Activated T-helper 1 cell treated with anti-CD3 and anti-CD28 coated beads, Interleukin-12 subunit alpha, Interleukin-12 subunit beta, Interleukin-2, Interleukin-4 antibody, amounts not matched to agents 30 ng/mL and 10 ng/mL and 1 ng/mL, durations not matched to agents 14 hours and 24 hours and 36 hours (primary cell): ENCODE measurements at regions of chr2 and their contacts with region 1.

Region 1: DNA sequence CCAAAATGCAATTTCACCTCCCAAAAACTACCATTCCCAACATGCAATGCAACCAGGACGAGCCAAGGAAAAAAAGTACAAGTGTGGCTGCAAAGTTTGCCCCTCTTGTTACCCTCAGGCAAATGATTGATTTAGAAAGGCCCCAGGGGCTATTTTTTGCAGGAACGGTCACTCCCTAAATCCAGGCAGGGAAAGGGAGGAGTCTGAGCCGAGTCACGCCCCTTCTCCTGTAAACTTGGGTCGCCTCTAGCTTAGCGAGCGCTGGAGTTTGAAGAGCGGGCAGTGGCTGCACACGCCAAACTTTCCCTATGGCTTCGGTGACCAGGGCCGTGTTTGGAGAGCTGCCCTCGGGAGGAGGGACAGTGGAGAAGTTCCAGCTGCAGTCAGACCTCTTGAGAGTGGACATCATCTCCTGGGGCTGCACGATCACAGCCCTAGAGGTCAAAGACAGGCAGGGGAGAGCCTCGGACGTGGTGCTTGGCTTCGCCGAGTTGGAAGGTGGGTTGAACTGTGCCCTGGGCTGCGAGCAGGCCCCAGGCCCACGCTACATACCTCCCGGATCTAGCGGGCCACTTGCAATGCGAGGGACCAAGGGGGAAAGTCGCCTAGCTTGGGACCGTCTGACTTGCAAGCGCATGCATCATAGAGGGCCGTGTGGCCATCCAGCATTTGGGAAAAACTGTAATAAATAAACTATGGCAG is at the start of gene GALM:
- DNase-seq: peak; percentile 54
- H3K4me3 Mint-ChIP-seq: peak within 1 kb of the TSS; percentile 93
- H3K27ac Mint-ChIP-seq: peak within 1 kb of the TSS; percentile 94
- H3K4me1 Mint-ChIP-seq: peaks cover 69% of the 10 kb centered on the region
- H3K27me3 Mint-ChIP-seq: no peaks in the 10 kb centered on the region
- total RNA-seq, gene GALM: 77.0 and 78.4 TPM in 2 replicates

Region 2: GRCh38 chr2:38030635-38031355 is 635.2 kb before region 1 on chr2:
- intact Hi-C with region 1: no loop called
- DNase-seq: no peak
- H3K4me3 Mint-ChIP-seq: no peak overlapping the region
- H3K27ac Mint-ChIP-seq: no peak overlapping the region
- H3K4me1 Mint-ChIP-seq: peaks cover 8% of the 10 kb centered on the region
- H3K27me3 Mint-ChIP-seq: peaks cover 11% of the 10 kb centered on the region

Region 3: DNA sequence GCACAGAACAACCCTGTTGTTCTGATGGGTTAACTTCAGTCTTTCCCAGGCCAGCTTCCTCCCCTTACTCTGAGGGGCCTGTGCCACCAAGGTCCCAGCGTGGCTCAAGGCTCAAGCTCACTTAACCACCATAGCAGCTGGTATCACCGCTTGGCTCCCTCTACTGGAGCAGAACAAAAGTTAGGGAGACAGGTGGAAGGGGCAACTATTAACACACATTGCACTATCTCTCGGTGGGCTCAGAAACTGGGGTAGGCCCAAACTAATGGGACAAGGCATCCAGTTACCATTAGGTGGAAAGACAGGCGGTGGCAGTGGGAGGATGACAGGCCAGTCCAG is 200.2 kb before region 1 on chr2:
- intact Hi-C with region 1: loop called (anchors 1 kb)
- DNase-seq: no peak
- H3K4me3 Mint-ChIP-seq: no peak overlapping the region
- H3K27ac Mint-ChIP-seq: no peak overlapping the region
- H3K4me1 Mint-ChIP-seq: peaks cover 10% of the 10 kb centered on the region
- H3K27me3 Mint-ChIP-seq: peaks cover 10% of the 10 kb centered on the region

Region 4: GRCh38 chr2:38619458-38620164 is 46.4 kb before region 1 on chr2:
- intact Hi-C with region 1: loop called (anchors 1 kb)
- DNase-seq: no peak
- H3K4me3 Mint-ChIP-seq: no peak overlapping the region
- H3K27ac Mint-ChIP-seq: no peak overlapping the region
- H3K4me1 Mint-ChIP-seq: peaks cover 31% of the 10 kb centered on the region
- H3K27me3 Mint-ChIP-seq: peaks cover 2% of the 10 kb centered on the region

Region 5: GRCh38 chr2:38682008-38682575 is 16.1 kb after region 1 on chr2:
- intact Hi-C with region 1: loop called (anchors 1 kb)
- DNase-seq: no peak
- H3K4me3 Mint-ChIP-seq: no peak overlapping the region
- H3K27ac Mint-ChIP-seq: peak overlapping the region; percentile 77
- H3K4me1 Mint-ChIP-seq: peaks cover 56% of the 10 kb centered on the region
- H3K27me3 Mint-ChIP-seq: no peaks in the 10 kb centered on the region

Region 6: GRCh38 chr2:38700113-38700785 is 34.2 kb after region 1 on chr2:
- intact Hi-C with region 1: loop called (anchors 1 kb)
- DNase-seq: no peak
- H3K4me3 Mint-ChIP-seq: peak overlapping the region; percentile 62
- H3K27ac Mint-ChIP-seq: peak overlapping the region; percentile 93
- H3K4me1 Mint-ChIP-seq: peaks cover 53% of the 10 kb centered on the region
- H3K27me3 Mint-ChIP-seq: no peaks in the 10 kb centered on the region

Region 7: DNA sequence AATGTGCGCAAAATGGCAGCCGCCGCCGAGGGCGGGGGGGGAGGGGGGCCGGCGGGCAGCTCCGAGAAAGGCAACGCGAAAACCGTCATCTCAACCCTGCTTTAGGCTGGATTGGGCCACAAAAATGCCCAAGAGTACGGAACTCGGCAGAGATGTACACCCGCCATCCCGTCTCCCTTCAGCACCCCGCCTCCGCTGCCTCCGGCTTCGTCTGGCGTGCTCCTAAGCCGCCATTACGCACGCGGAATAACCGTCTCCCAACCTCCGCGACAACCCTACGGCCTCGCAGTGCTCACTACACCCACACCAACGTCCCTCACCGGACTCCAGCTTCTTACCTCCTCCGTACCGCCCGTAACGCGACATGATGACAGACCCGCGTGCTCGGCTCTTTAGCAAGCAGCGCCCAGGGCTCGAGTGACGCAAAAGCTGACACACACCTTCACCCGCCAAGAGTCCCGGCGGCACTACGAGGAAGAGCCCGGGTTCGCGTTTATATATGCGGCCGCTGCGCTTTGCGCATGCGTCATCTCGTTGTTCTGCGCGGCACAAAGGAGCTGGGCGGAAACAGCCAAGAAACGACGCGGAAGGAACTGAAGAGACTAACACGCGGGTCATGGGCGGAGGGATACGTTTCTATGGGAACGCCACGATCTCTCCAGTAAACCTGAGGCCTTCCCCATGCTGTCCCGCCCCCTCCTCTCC is 85.0 kb after region 1 on chr2 and contains the start of gene SRSF7:
- intact Hi-C with region 1: loop called (anchors 1 kb)
- DNase-seq: peak; percentile 96
- H3K4me3 Mint-ChIP-seq: peak within 1 kb of the TSS; percentile 98
- H3K27ac Mint-ChIP-seq: peak within 1 kb of the TSS; percentile 100
- H3K4me1 Mint-ChIP-seq: peaks cover 54% of the 10 kb centered on the region
- H3K27me3 Mint-ChIP-seq: no peaks in the 10 kb centered on the region
- total RNA-seq, gene SRSF7: 417 and 422 TPM in 2 replicates